ENCODE measurements at regions of chr2 and their contacts with region 1.

Region 1: GRCh38 chr2:72165792-72166191 is 18.1 kb upstream of the CYP26B1 start:
- DNase-seq: no peak
- H3K4me3 ChIP-seq: no peak overlapping the region
- H3K27ac ChIP-seq: no peak overlapping the region
- H3K4me1 ChIP-seq: no peaks in the 10 kb centered on the region
- H3K27me3 ChIP-seq: no peaks in the 10 kb centered on the region
- CTCF ChIP-seq: no peak

Region 2: GRCh38 chr2:71767663-71768062 is 398.1 kb before region 1 on chr2:
- intact Hi-C with region 1: no loop called
- DNase-seq: no peak
- H3K4me3 ChIP-seq: no peak overlapping the region
- H3K27ac ChIP-seq: no peak overlapping the region
- H3K4me1 ChIP-seq: no peaks in the 10 kb centered on the region
- H3K27me3 ChIP-seq: no peaks in the 10 kb centered on the region
- CTCF ChIP-seq: no peak

Region 3: GRCh38 chr2:71861186-71862160 is 304.3 kb before region 1 on chr2:
- intact Hi-C with region 1: no loop called
- DNase-seq: no peak
- H3K4me3 ChIP-seq: no peak overlapping the region
- H3K27ac ChIP-seq: no peak overlapping the region
- H3K4me1 ChIP-seq: no peaks in the 10 kb centered on the region
- H3K27me3 ChIP-seq: peaks cover 3% of the 10 kb centered on the region
- CTCF ChIP-seq: no peak

Region 4: DNA sequence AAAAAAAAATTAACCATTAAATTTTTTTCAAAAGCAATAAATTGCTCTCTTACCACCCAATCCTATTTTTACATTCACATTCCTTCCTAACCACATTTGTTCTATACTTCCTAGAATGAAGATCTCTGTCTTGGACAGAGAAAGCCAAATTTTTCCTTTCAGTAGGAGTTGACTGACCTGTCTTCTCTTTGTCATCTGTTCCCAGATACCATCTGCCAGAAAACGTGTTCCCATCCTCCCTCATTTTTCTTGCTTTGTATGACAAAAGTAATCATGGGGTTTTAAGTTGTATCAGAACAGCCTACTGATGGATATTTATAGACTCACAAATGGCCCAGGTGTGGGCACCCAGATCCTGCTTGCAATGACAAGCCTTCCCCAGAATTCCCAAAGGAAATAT is 200.3 kb before region 1 on chr2:
- intact Hi-C with region 1: no loop called
- DNase-seq: no peak
- H3K4me3 ChIP-seq: no peak overlapping the region
- H3K27ac ChIP-seq: no peak overlapping the region
- H3K4me1 ChIP-seq: no peaks in the 10 kb centered on the region
- H3K27me3 ChIP-seq: peaks cover 19% of the 10 kb centered on the region
- CTCF ChIP-seq: no peak

Region 5: DNA sequence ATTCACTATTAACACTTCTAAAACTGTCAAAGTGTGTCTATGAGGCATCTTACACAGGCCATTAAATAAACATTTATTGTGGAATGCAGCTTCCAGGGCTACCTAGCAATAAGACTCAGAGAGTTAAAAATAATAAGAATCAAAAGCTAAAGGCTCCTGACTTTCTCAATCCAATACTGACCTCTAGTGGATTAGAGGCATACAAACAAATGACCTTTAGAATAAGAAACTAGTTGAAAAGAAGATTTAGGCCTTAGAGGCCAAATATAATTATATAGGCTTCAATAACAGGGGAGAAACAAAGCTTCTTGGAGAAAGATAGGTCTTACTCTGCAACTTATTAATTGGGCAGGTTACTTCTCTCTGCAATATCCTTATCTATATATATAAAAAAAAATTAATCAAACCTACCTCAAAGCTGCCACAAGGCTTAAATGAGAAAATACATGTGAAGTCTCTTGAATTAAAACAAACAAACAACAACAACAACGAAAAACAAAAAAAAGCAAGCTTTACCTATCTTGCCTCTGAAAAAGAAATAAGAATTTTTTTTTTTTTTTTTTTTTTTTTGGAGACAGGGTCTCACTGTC is 413.9 kb after region 1 on chr2:
- intact Hi-C with region 1: loop called (anchors 10 kb)
- DNase-seq: no peak
- H3K4me3 ChIP-seq: no peak overlapping the region
- H3K27ac ChIP-seq: no peak overlapping the region
- H3K4me1 ChIP-seq: peaks cover 40% of the 10 kb centered on the region
- H3K27me3 ChIP-seq: no peaks in the 10 kb centered on the region
- CTCF ChIP-seq: peak; percentile 74